ENCODE measurements at regions of chr14 and their contacts with region 1.

Region 1: DNA sequence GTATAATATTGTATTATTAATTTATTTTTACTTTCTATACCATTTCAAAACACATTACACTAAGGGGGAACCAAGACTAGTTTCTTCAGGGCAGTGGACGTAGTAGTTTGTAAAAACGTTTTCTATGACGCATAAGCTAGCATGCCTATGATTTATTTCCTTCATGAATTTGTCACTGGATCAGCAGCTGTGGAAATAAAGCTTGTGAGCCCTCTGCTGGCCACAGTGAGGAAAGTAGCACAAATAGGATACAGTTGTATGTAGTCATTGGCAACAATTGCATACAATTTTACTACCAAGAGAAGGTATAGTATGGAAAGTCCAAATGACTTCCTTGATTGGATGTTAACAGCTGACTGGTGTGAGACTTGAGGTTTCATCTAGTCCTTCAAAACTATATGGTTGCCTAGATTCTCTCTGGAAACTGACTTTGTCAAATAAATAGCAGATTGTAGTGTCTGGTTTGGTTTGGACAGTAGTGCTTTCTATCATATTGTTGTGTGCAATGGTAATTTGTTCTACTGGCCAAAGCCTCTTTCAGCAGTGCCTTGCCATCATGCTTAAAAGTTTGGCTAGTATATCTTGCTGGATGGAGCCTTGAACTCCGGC is 24.3 kb upstream of the PLEKHD1 start:
- H3K4me3 ChIP-seq: no peak overlapping the region
- H3K27ac ChIP-seq: no peak overlapping the region
- H3K4me1 ChIP-seq: no peaks in the 10 kb centered on the region
- CTCF ChIP-seq: peak; percentile 34; the same call in 1 of the 2 replicates

Region 2: DNA sequence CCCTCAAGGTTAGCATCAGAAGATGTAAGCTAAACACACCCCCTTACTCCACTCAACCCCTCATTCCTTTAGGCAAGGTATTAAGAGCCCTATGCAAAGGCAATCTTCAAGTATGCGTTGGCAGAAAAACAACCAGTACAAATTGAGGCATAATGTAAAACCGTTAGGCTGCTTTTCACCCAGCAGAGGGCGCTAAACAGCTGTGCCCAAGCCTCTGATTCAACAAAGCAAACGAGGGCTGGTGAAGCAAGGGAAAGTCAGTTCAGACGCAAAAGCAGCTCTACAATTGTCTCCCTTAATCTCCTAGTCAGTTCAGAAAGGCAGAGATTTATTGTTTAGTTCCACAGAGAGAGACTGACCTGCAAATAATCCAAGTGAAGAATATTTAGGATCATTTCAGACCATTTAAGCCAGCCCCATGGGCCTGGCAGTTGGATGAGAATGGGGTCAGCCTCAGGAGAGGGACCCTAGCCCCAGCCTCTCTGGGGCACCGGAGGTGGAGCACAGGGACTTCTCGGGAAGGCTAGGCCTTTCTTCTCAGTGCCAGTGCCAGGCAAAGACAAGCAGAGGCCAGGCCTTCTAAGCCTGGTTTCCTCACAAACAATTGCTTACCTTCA is 330.8 kb before region 1 on chr14:
- CTCF ChIA-PET with region 1: interaction called, 14 read pairs
- POLR2A ChIA-PET with region 1: no interaction called
- H3K4me3 ChIP-seq: no peak overlapping the region
- H3K27ac ChIP-seq: no peak overlapping the region
- H3K4me1 ChIP-seq: peaks cover 49% of the 10 kb centered on the region
- CTCF ChIP-seq: peak; percentile 69; the same call in 1 of the 2 replicates

Region 3: DNA sequence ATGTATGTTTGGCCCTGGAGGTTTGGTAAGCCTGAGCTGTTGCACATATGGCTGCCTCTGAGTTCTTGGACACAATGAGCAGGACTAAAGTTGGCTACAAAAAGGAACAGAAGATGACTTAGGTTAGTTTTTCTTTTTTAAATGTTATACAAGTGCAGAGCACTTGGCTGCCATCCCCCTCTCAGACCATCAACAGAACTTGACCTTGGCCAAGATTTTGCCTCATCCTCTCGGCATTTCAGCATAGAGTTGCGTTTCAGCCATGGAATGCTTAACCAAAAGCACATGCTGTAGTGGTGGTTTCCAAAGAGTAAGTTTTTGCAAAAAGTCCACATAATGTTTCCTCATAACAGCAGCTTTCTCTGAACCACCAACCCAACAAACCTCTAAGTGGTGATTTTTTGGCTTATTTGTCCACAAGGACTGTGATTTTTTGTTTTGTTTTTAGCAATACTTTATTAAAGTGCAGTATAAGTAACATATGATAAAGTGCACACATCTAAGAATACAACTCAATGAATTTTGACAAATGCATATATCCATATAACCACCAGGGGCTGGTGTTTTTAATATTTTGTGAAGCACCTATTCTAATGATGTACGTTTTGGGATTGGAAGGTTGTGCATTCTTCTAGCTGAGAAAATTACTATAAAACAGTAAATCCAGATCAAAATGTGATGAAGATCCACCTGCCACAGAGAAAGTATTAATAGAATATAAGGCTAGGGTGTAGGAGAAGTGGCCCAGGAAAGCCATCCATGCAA is 212.3 kb before region 1 on chr14:
- CTCF ChIA-PET with region 1: interaction called, 45 read pairs
- POLR2A ChIA-PET with region 1: no interaction called
- H3K4me3 ChIP-seq: no peak overlapping the region
- H3K27ac ChIP-seq: no peak overlapping the region
- H3K4me1 ChIP-seq: no peaks in the 10 kb centered on the region
- CTCF ChIP-seq: no peak

Region 4: DNA sequence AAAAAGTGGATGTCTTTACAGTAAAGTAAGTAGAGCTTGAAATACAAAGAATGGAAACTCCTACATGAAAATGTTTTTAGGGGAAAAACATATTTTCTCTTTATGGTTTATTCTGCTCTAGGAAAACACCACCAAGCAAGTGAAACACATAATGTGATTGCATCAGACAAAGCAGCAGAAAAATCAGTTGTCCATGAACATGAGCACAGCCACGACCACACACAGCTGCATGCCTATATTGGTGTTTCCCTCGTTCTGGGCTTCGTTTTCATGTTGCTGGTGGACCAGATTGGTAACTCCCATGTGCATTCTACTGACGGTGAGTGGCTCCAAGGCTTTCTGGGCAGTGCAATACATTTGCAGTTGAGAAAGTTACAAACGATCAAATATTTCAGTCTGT is 18.2 kb before region 1 on chr14:
- CTCF ChIA-PET with region 1: interaction called, 5 read pairs
- POLR2A ChIA-PET with region 1: interaction called, 10 read pairs
- H3K4me3 ChIP-seq: no peak overlapping the region
- H3K27ac ChIP-seq: no peak overlapping the region
- H3K4me1 ChIP-seq: no peaks in the 10 kb centered on the region; the same call in 1 of the 2 replicates
- CTCF ChIP-seq: no peak

Measured in HEK293 (cell line).